ENCODE measurements at regions of chr17 and their contacts with region 1.

Region 1: GRCh38 chr17:63697341-63698286 is 2.3 kb downstream of the LIMD2 start:
- DNase-seq: peak; percentile 79 to 94
- ATAC-seq: peak; percentile 28 to 59 (median 32)
- H3K4me3 ChIP-seq: peak overlapping the region; percentile 78
- H3K4me3 Mint-ChIP-seq: peak overlapping the region; percentile 96
- H3K27ac ChIP-seq: peak overlapping the region; percentile 80
- H3K27ac Mint-ChIP-seq: peak overlapping the region; percentile 91 to 97
- H3K4me1 ChIP-seq: peaks cover 64% of the 10 kb centered on the region
- H3K4me1 Mint-ChIP-seq: peaks cover 63 to 70% of the 10 kb centered on the region in 2 donors
- H3K27me3 ChIP-seq: no peaks in the 10 kb centered on the region
- H3K27me3 Mint-ChIP-seq: no peaks in the 10 kb centered on the region
- CTCF ChIP-seq: peak; percentile 76

Region 2: DNA sequence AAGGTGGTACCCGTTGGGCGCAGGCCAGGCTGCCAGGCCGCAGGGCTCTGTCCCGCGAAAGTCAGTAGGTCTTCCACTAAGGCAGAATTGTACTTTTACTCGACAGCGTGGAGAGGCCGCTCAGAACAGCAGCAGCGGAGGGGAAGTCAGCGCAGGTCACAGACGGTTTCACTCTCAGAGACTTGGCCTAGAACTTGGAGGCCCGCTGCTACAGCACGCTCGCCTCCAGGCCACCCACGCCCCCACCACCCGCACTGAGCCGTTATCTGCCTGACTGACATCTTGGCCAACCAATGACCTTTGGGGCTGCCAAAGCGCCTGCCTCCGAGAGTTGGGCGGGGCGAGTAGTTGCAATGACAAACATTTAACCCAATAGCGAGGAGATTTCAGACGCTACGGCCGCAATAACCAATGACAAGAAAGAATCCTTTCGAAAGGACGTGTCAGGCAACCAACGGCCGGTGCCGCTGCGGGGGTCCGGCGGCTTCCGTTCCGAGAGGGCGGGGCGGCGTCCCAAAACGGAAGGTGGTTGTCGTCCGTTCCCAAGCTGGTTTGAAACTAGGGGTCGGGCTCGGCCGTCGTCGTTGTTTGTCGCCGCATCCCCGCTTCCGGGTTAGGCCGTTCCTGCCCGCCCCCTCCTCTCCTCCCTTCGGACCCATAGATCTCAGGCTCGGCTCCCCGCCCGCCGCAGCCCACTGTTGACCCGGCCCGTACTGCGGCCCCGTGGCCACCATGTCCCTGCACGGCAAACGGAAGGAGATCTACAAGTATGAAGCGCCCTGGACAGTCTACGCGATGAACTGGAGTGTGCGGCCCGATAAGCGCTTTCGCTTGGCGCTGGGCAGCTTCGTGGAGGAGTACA is 147.4 kb before region 1 on chr17 and contains the start of gene DCAF7:
- intact Hi-C with region 1: loop called (anchors 5 kb)
- DNase-seq: peak; percentile 98 to 100
- ATAC-seq: peak; percentile 90 to 98 (median 91)
- H3K4me3 ChIP-seq: peak within 1 kb of the TSS; percentile 98
- H3K4me3 Mint-ChIP-seq: peak within 1 kb of the TSS; percentile 82
- H3K27ac ChIP-seq: peak within 1 kb of the TSS; percentile 99
- H3K27ac Mint-ChIP-seq: peak within 1 kb of the TSS; percentile 95 to 97
- H3K4me1 ChIP-seq: peaks cover 29% of the 10 kb centered on the region
- H3K4me1 Mint-ChIP-seq: peaks cover 37 to 53% of the 10 kb centered on the region in 2 donors
- H3K27me3 ChIP-seq: no peaks in the 10 kb centered on the region
- H3K27me3 Mint-ChIP-seq: no peaks in the 10 kb centered on the region
- CTCF ChIP-seq: no peak
- total RNA-seq, gene DCAF7: 55.5 to 83.5 (median 72.2) TPM

Region 3: DNA sequence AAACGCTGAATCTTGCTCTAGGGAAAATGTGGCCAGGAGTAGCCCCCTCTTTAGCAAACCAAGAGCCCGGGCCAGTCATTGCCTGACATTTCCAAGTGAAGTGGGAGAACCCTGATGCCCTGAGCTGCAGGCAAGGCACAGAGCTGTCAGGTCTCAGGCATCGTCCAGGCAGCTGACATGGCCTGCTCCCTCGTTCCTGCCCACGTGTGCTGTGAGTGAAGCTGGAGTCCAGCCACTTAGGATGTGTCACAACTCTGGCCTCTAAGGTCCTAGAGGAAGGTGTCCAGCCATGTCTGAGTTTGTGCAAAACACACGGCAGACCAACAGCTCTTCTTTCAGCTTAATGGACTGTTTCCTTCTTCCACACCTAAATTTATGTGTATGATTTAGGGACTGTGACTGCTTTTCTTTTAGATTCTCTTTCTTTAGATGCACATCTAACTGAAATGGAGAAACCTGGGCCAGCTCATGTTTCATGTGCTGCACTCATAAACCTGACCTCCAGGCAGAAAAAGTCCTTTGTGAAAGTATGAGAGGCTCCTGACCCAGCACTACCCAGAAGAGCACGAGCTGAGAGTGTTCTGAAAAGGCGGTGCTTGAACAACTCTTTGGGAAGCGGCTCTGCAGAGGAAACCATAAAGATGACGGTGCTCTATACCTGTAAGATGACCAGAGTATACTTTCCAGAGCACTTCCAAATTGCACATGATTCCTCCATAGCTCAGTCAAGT is 17.1 kb after region 1 on chr17:
- intact Hi-C with region 1: loop called (anchors 1 kb)
- DNase-seq: no peak
- ATAC-seq: no peak
- H3K4me3 ChIP-seq: no peak overlapping the region
- H3K4me3 Mint-ChIP-seq: no peak overlapping the region
- H3K27ac ChIP-seq: no peak overlapping the region
- H3K27ac Mint-ChIP-seq: no peak overlapping the region
- H3K4me1 ChIP-seq: peaks cover 10% of the 10 kb centered on the region
- H3K4me1 Mint-ChIP-seq: peaks cover 13 to 14% of the 10 kb centered on the region in 2 donors
- H3K27me3 ChIP-seq: no peaks in the 10 kb centered on the region
- H3K27me3 Mint-ChIP-seq: no peaks in the 10 kb centered on the region
- CTCF ChIP-seq: no peak

Region 4: GRCh38 chr17:63773381-63774140 is 75.9 kb after region 1 on chr17 and contains the start of gene CCDC47:
- intact Hi-C with region 1: loop called (anchors 2 kb)
- DNase-seq: peak; percentile 93 to 99
- ATAC-seq: peak; percentile 81 to 94 (median 84)
- H3K4me3 ChIP-seq: peak within 1 kb of the TSS; percentile 88
- H3K4me3 Mint-ChIP-seq: peak within 1 kb of the TSS; percentile 95
- H3K27ac ChIP-seq: peak within 1 kb of the TSS; percentile 94
- H3K27ac Mint-ChIP-seq: peak within 1 kb of the TSS; percentile 98 to 99
- H3K4me1 ChIP-seq: peaks cover 22% of the 10 kb centered on the region
- H3K4me1 Mint-ChIP-seq: peaks cover 51 to 65% of the 10 kb centered on the region in 2 donors
- H3K27me3 ChIP-seq: no peaks in the 10 kb centered on the region
- H3K27me3 Mint-ChIP-seq: no peaks in the 10 kb centered on the region
- CTCF ChIP-seq: no peak
- total RNA-seq, gene CCDC47: 37.9 to 45.2 (median 41.7) TPM

Region 5: GRCh38 chr17:63842540-63843386 is 145.1 kb after region 1 on chr17 and contains the start of gene SMARCD2:
- intact Hi-C with region 1: loop called (anchors 2 kb)
- DNase-seq: peak; percentile 96 to 99
- ATAC-seq: peak; percentile 91 to 98 (median 91)
- H3K4me3 ChIP-seq: peak within 1 kb of the TSS; percentile 93
- H3K4me3 Mint-ChIP-seq: peak within 1 kb of the TSS; percentile 95
- H3K27ac ChIP-seq: peak within 1 kb of the TSS; percentile 95
- H3K27ac Mint-ChIP-seq: peak within 1 kb of the TSS; percentile 89 to 92
- H3K4me1 ChIP-seq: peaks cover 54% of the 10 kb centered on the region
- H3K4me1 Mint-ChIP-seq: peaks cover 30 to 47% of the 10 kb centered on the region in 2 donors
- H3K27me3 ChIP-seq: no peaks in the 10 kb centered on the region
- H3K27me3 Mint-ChIP-seq: no peaks in the 10 kb centered on the region
- CTCF ChIP-seq: no peak
- total RNA-seq, gene SMARCD2: 131 to 162 (median 139) TPM